Activated naive CD4-positive, alpha-beta T cell treated with anti-CD3 and anti-CD28 coated beads, Interleukin-2, amount 10 ng/mL, durations not matched to agents 7 days and 5 days (primary cell): ENCODE measurements at regions of chr6 and their contacts with region 1.

Region 1: GRCh38 chr6:44655412-44656342 is 268.2 kb downstream of the CDC5L start:
- DNase-seq: peak; percentile 79
- H3K4me3 Mint-ChIP-seq: peak overlapping the region; percentile 25
- H3K27ac Mint-ChIP-seq: peak overlapping the region; percentile 83
- H3K4me1 Mint-ChIP-seq: peaks cover 11% of the 10 kb centered on the region
- H3K27me3 Mint-ChIP-seq: peaks cover 29% of the 10 kb centered on the region

Region 2: DNA sequence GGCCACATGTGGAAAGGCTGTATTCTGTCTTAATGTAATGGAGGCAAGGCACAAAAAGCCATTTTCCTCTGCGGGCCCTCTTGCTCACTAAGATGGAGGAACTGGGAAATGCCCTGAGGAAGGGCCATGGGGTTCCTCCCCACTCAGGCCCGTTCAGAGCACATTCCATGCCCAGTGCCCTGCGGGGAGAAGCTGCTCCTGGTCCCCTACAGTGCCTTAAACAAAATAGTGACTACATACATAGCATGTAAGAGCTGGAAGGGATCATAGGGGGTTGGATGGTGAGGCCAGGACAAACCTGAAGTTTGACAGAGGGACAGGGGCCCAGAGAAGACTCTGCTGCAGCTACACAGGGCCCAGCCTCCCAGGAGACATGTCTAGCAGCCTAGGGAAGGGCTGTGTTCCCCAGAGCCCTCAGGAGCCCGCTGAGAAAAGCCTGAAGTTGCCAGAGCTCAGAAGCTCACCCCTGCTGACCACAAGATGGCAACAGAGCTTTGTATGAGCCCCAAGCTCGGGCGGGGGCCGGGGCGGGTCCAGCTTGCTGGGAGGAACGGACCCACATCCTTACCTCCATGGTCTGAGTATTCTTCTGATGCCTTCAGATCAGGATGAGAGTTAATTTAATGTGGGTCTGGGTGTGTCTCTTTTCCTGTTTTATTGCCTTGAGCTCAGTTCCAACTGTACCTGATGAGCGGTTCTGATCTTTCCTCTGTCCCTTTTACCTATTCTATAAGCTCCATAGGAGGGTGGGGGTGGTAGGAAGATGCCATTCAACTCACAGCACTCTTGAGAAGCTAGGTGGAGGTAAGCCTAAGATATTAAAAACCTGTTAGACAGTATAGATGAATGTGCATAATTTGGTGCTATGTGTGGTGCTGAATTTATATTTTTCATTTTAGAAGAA is 25.3 kb before region 1 on chr6:
- CTCF ChIA-PET with region 1: interaction called, 21 read pairs
- DNase-seq: peak; percentile 53
- H3K4me3 Mint-ChIP-seq: no peak overlapping the region
- H3K27ac Mint-ChIP-seq: no peak overlapping the region
- H3K4me1 Mint-ChIP-seq: peaks cover 24% of the 10 kb centered on the region
- H3K27me3 Mint-ChIP-seq: peaks cover 20% of the 10 kb centered on the region

Region 3: DNA sequence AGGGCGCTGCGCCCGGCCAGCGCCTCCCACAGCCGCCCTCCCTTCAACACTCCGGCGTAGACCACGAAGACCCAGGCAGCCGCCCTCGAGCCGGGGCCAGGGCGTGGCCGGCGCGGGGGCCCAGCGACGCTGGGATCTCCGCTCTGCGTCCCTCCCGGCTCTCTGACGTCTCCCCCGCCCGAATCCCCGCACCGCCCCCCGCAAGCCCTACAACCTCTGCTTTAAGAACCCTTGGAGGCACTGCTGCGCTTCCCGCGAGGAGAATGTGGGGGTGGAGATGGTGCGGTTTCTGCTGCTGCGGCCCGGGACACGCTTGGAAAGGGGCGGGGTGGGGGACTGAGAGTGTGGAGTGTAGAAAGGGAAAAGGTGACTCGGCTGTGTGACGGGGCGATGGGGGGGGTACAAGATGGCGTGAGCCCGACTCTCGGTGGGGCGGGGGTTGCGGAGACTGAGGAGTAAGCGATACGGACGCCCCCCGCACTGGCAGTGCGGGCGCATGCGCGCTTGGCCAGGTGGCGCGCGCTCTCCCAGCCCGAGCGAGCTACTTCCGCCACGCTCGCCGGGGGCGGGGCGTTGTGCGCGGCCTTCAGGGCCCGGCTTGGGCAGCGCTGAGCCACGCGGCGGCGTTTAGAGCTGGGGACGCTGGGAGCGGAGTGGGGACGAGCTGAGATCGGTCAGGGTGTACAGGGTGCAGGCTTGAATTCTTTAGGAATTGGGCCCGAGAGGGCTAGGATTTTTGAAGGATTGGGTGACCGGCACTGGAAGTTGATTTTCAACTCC is 722.1 kb after region 1 on chr6 and contains the start of gene SUPT3H:
- CTCF ChIA-PET with region 1: interaction called, 17 read pairs
- DNase-seq: peak; percentile 90
- H3K4me3 Mint-ChIP-seq: peak within 1 kb of the TSS; percentile 99
- H3K27ac Mint-ChIP-seq: peak within 1 kb of the TSS; percentile 99
- H3K4me1 Mint-ChIP-seq: peaks cover 28% of the 10 kb centered on the region
- H3K27me3 Mint-ChIP-seq: no peaks in the 10 kb centered on the region

Region 4: DNA sequence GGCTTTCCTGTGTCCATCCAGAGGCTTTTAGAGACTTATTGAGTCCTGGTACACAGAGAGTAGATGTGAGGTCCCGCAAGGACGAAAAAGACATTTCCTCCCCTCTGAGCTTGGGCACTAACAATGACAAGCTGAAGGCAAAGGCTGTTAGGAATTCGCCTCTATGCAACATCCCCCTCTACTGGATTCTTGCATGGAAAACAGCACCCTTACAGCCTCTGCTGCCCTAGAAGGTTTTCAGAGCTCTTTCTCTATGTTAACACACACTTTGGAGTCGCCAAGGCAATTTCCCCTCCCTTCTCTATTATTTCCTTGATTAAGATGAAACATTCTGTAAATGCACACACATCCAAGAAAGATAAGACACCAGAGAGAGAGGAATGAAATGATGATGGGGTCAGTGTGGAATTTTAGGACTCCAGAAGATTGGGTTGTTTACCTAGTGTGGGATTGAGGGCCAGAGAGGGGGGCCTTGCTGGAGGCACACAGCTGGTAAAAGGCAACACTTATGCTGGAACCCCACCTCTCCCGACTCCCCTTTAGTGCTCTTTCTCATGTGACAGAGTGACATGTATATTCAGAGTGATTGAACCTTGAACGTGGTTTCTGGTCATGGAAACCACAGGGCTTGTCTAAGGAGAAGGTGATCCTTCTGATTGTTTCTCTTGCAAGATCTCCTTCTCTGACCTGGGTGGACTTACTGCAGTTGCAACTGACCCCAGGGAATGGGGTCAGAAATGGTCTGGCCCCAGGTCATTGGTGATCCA is 1059.2 kb after region 1 on chr6:
- CTCF ChIA-PET with region 1: interaction called, 14 read pairs
- DNase-seq: peak; percentile 69
- H3K4me3 Mint-ChIP-seq: no peak overlapping the region
- H3K27ac Mint-ChIP-seq: peak overlapping the region; percentile 58
- H3K4me1 Mint-ChIP-seq: peaks cover 37% of the 10 kb centered on the region
- H3K27me3 Mint-ChIP-seq: peaks cover 16% of the 10 kb centered on the region